Dendritic cell treated with granulocyte-macrophage colony-stimulating factor and Interleukin-4, amounts not matched to agents 40 ng/mL and 50 ng/mL, for 4 days (primary cell): ENCODE measurements at regions of chr5 and their contacts with region 1.

Region 1: DNA sequence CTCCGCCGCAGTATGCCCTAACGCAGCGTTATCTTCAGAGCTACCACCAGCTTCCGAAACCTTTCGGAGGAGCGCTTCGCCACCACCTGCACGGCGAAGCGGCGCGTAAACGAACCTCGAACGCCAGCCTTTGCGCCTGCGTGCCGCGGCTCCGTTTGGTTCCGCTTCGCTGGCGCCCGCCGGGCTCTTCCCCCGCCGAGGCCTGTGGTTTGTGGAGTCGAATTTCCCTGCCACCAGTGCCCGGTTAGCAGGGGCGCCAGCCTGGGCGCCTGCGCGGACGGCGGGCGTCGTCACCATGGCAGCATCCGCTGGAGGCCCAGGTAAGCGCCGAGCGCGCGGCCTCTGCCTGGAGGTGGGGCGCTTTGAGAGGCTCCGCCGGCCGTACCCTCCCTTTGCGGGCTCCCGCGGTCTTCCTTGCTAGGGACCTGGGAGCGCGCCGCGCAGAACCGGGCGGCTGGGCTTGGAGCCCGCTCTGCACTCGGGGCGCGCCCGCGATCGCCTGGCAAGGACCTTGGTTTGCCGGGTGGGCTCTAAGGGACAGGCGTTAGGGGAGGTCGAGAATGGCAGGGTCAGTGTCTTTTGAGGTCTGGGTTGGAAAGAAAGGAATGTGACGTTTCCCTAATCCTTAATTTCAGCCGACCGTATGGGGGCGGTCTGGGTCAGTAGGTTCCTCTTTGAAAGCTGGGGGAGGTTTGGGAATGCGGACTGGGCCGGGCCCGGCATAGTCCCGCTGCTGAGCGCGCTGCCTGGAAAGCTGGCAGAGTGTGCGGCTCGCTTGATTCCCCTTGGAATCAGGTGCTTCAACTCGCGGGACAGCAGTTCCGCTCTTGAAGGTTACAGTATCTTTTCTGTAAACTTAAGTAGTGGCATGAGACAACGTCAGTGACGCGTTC is at the start of gene FAM151B:
- H3K4me3 Mint-ChIP-seq: peak within 1 kb of the TSS; percentile 84
- H3K27ac Mint-ChIP-seq: peak within 1 kb of the TSS; percentile 84
- H3K4me1 Mint-ChIP-seq: peaks cover 28% of the 10 kb centered on the region
- H3K27me3 Mint-ChIP-seq: no peaks in the 10 kb centered on the region

Region 2: GRCh38 chr5:80466669-80467485 is 21.2 kb before region 1 on chr5:
- intact Hi-C with region 1: no loop called
- H3K4me3 Mint-ChIP-seq: no peak overlapping the region
- H3K27ac Mint-ChIP-seq: no peak overlapping the region
- H3K4me1 Mint-ChIP-seq: peaks cover 20% of the 10 kb centered on the region
- H3K27me3 Mint-ChIP-seq: no peaks in the 10 kb centered on the region

Region 3: GRCh38 chr5:80672140-80672736 is 184.2 kb after region 1 on chr5:
- intact Hi-C with region 1: loop called (anchors 2 kb)
- H3K4me3 Mint-ChIP-seq: no peak overlapping the region
- H3K27ac Mint-ChIP-seq: no peak overlapping the region
- H3K4me1 Mint-ChIP-seq: no peaks in the 10 kb centered on the region
- H3K27me3 Mint-ChIP-seq: no peaks in the 10 kb centered on the region